ENCODE measurements at regions of chr15 and their contacts with region 1.

Region 1: GRCh38 chr15:32994810-32995424 is 199.6 kb downstream of the FMN1 start:
- DNase-seq: no peak
- ATAC-seq: no peak
- H3K4me3 ChIP-seq: no peak overlapping the region
- H3K27ac ChIP-seq: no peak overlapping the region
- H3K4me1 ChIP-seq: no peaks in the 10 kb centered on the region
- H3K27me3 ChIP-seq: no peaks in the 10 kb centered on the region
- CTCF ChIP-seq: peak; percentile 34 to 62 (median 48)
- POLR2A ChIP-seq: no peak

Region 2: GRCh38 chr15:32657198-32657883 is 337.6 kb before region 1 on chr15:
- intact Hi-C with region 1: loop called (anchors 2 to 5 kb)
- DNase-seq: no peak
- ATAC-seq: no peak
- H3K4me3 ChIP-seq: no peak overlapping the region
- H3K27ac ChIP-seq: no peak overlapping the region
- H3K4me1 ChIP-seq: peaks cover 0 to 3% (median 0%) of the 10 kb centered on the region in 12 donors
- H3K27me3 ChIP-seq: no peaks in the 10 kb centered on the region
- CTCF ChIP-seq: no peak
- POLR2A ChIP-seq: no peak

Region 3: DNA sequence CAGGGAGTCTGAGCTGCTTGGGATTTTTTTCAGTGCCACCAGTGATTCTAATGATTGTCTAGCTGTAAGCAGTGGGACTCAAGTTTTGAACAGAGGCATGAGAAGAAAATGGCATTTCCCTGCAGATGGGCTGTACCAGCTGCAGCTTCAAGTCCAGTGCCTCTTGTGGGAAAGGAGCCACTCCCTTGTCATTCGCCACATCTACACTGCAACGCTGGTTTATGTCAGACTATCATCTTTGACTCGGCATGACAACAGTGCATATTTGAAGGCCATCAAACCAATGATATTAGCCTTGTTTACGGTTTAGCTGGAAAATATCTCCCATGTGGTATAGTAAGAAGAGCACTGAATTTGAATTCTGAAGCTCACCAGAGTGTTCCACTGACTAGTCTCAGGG is 331.2 kb before region 1 on chr15:
- intact Hi-C with region 1: loop called (anchors 2 to 5 kb)
- DNase-seq: no peak
- ATAC-seq: no peak
- H3K4me3 ChIP-seq: no peak overlapping the region
- H3K27ac ChIP-seq: no peak overlapping the region
- H3K4me1 ChIP-seq: peaks cover 0 to 3% (median 0%) of the 10 kb centered on the region in 12 donors
- H3K27me3 ChIP-seq: no peaks in the 10 kb centered on the region
- CTCF ChIP-seq: no peak
- POLR2A ChIP-seq: no peak

Region 4: GRCh38 chr15:32838820-32839219 is 156.1 kb before region 1 on chr15:
- intact Hi-C with region 1: loop called in 4 of 10 experiments (anchors 5 to 10 kb)
- DNase-seq: no peak
- ATAC-seq: peak in 1 of 4 donors; percentile 34
- H3K4me3 ChIP-seq: no peak overlapping the region
- H3K27ac ChIP-seq: no peak overlapping the region
- H3K4me1 ChIP-seq: no peaks in the 10 kb centered on the region
- H3K27me3 ChIP-seq: peaks cover 0 to 10% (median 0%) of the 10 kb centered on the region in 9 donors
- CTCF ChIP-seq: no peak
- POLR2A ChIP-seq: no peak

Region 5: GRCh38 chr15:32844118-32844711 is 150.7 kb before region 1 on chr15:
- intact Hi-C with region 1: loop called in 4 of 10 experiments (anchors 5 to 10 kb)
- DNase-seq: no peak
- ATAC-seq: no peak
- H3K4me3 ChIP-seq: no peak overlapping the region
- H3K27ac ChIP-seq: no peak overlapping the region
- H3K4me1 ChIP-seq: no peaks in the 10 kb centered on the region
- H3K27me3 ChIP-seq: peaks cover 0 to under 1% (median 0%) of the 10 kb centered on the region in 9 donors
- CTCF ChIP-seq: peak; percentile 27 to 66 (median 50)
- POLR2A ChIP-seq: no peak

Region 6: GRCh38 chr15:32855942-32856341 is 139.0 kb before region 1 on chr15:
- intact Hi-C with region 1: loop called in 1 of 10 experiments (anchors 10 kb)
- DNase-seq: peak in 1 of 5 donors; percentile 6
- ATAC-seq: peak; percentile 51 to 96 (median 90)
- H3K4me3 ChIP-seq: no peak overlapping the region
- H3K27ac ChIP-seq: peak overlapping the region in 1 of 12 donors; percentile 30
- H3K4me1 ChIP-seq: peaks cover 0 to 8% (median 0%) of the 10 kb centered on the region in 12 donors
- H3K27me3 ChIP-seq: no peaks in the 10 kb centered on the region
- CTCF ChIP-seq: no peak
- POLR2A ChIP-seq: no peak

Region 7: DNA sequence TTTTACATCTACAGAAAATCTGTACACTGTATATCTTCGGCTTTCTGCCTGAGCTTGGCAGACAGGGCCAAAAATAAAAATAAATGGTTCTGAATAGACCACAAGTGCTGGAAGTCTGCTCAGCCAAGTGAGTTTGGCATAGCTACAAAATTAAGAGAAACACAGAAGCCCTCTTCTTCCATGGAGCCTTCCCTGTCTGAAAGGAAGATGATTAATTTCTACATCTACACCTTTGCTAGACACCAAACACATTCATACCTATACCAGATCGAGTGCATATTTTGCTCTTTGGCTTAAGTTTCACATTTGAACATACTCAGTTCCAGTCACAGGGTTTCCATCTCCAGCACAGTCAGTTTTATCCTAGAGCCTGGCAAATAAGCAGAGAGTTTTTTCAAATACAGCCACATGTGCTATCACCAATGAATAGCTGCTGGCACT is 52.5 kb before region 1 on chr15:
- intact Hi-C with region 1: loop called in 1 of 10 experiments (anchors 5 kb)
- DNase-seq: no peak
- ATAC-seq: no peak
- H3K4me3 ChIP-seq: no peak overlapping the region
- H3K27ac ChIP-seq: peak overlapping the region in 1 of 12 donors; percentile 31
- H3K4me1 ChIP-seq: peaks cover 0 to 16% (median 3%) of the 10 kb centered on the region in 12 donors
- H3K27me3 ChIP-seq: no peaks in the 10 kb centered on the region
- CTCF ChIP-seq: no peak
- POLR2A ChIP-seq: no peak

Measured in heart left ventricle (tissue), 16 donors.